Caco-2 (cell line): ENCODE measurements at regions of chr17 and their contacts with region 1.

Region 1: GRCh38 chr17:76868176-76868668 is at the start of gene MGAT5B:
- DNase-seq: peak; percentile 80 to 93
- H3K4me3 ChIP-seq: peak within 1 kb of the TSS; percentile 44
- H3K4me3 Mint-ChIP-seq: peak within 1 kb of the TSS; percentile 62
- H3K27ac Mint-ChIP-seq: no peak within 1 kb of the TSS
- H3K4me1 ChIP-seq: peaks cover 17% of the 10 kb centered on the region; the same call in 1 of the 2 replicates
- H3K4me1 Mint-ChIP-seq: peaks cover 13% of the 10 kb centered on the region
- H3K27me3 ChIP-seq: no peaks in the 10 kb centered on the region
- H3K27me3 Mint-ChIP-seq: no peaks in the 10 kb centered on the region
- CTCF ChIP-seq: peak; percentile 59 to 92
- total RNA-seq, gene MGAT5B: 8.9 and 9.1 TPM in 2 replicates

Region 2: GRCh38 chr17:76659928-76660614 is 208.2 kb before region 1 on chr17:
- CTCF ChIA-PET with region 1: no interaction called
- POLR2A ChIA-PET with region 1: no interaction called
- intact Hi-C with region 1: no loop called
- DNase-seq: peak in 1 of 2 experiments; percentile 51
- H3K4me3 ChIP-seq: no peak overlapping the region
- H3K4me3 Mint-ChIP-seq: no peak overlapping the region
- H3K27ac Mint-ChIP-seq: no peak overlapping the region
- H3K4me1 ChIP-seq: peaks cover 28% of the 10 kb centered on the region
- H3K4me1 Mint-ChIP-seq: peaks cover 25% of the 10 kb centered on the region
- H3K27me3 ChIP-seq: no peaks in the 10 kb centered on the region
- H3K27me3 Mint-ChIP-seq: no peaks in the 10 kb centered on the region
- CTCF ChIP-seq: no peak

Region 3: GRCh38 chr17:77002103-77003045 is 134.2 kb after region 1 on chr17:
- CTCF ChIA-PET with region 1: interaction called, 3 read pairs
- POLR2A ChIA-PET with region 1: no interaction called
- intact Hi-C with region 1: loop called (anchors 2 kb)
- DNase-seq: peak; percentile 92 to 93
- H3K4me3 ChIP-seq: no peak overlapping the region
- H3K4me3 Mint-ChIP-seq: peak overlapping the region; percentile 72
- H3K27ac Mint-ChIP-seq: peak overlapping the region; percentile 96
- H3K4me1 ChIP-seq: peaks cover 25% of the 10 kb centered on the region
- H3K4me1 Mint-ChIP-seq: peaks cover 27% of the 10 kb centered on the region
- H3K27me3 ChIP-seq: no peaks in the 10 kb centered on the region
- H3K27me3 Mint-ChIP-seq: no peaks in the 10 kb centered on the region
- CTCF ChIP-seq: no peak

Region 4: DNA sequence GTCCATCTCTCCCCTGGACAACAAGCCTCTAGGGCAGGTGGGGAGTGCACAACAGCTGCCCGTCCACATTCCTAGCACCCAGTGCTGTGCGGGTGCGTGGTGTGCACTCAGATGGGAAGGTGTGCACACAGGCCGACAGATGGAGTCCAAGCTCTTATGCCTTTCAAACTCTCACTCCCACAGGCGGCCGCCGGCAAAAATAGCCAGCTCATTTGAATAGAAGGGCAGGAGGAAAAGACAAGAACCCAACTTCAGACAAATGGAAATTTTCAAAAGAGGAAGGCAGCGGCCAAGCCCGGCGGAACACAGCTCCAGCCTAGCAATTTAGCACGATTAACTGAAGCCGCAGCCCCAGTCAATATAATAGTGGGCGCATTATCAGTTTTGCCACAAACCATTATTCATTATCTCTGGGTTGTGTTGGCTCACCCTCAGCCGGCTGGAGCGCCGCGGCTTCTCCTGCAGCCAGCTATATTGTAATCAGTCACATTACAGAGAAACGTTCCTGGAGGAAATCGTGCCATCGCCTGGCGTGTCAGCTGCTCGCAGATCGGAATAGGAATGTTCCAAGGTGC is 168.7 kb after region 1 on chr17:
- CTCF ChIA-PET with region 1: interaction called, 15 read pairs
- POLR2A ChIA-PET with region 1: no interaction called
- intact Hi-C with region 1: no loop called
- DNase-seq: peak; percentile 70 to 75
- H3K4me3 ChIP-seq: no peak overlapping the region
- H3K4me3 Mint-ChIP-seq: peak overlapping the region; percentile 50
- H3K27ac Mint-ChIP-seq: no peak overlapping the region
- H3K4me1 ChIP-seq: no peaks in the 10 kb centered on the region
- H3K4me1 Mint-ChIP-seq: peaks cover 14% of the 10 kb centered on the region
- H3K27me3 ChIP-seq: no peaks in the 10 kb centered on the region
- H3K27me3 Mint-ChIP-seq: peaks cover 2% of the 10 kb centered on the region
- CTCF ChIP-seq: peak in 1 of 2 experiments; percentile 53

Region 5: DNA sequence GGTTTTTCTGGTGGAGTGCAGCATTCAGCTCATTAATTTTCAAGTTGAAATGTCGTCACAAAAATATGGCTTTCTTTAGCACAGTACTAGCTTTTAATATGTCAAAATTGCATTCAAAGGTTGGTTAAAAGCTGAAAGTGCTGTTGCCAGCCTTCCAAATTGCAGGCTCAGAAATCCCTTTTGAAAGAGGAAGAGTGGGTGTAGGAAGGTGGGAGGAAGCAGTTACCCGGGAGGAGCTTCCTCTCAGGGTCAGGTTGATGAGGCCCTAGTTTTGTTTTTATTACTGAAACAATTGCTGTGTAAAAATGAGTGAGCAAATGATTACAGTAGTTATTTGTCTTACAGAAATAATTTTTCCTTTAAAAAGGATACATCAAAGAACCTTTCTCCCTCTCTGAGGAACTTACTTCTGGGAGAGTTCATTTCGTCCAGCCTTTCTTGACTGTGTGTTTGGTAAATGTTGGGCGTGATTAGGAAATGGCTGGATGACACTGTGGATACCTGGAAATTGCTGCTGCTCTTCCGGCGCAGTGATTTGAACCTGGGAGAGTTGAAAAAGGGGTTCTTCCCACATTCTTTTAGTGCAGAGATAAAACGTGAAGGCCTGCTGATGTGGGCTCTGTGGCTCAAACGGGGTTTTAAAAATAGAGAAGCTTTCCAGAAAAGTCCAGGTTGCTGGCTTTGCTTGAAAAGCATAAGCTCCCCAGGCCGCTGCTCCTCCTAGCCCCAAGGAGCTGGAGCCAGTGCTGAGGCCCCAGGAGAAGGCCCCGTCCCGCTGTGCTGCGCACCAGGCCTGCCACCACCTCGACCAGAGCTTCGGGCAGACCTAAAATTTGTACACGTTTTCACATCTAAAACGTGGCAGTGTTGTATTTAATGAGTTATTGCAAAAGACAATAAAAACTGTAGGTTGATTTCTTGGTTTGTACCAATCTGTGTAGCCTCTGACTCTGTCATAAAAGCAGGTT is 314.3 kb after region 1 on chr17:
- CTCF ChIA-PET with region 1: no interaction called
- POLR2A ChIA-PET with region 1: no interaction called
- intact Hi-C with region 1: no loop called
- DNase-seq: no peak
- H3K4me3 ChIP-seq: no peak overlapping the region
- H3K4me3 Mint-ChIP-seq: no peak overlapping the region
- H3K27ac Mint-ChIP-seq: no peak overlapping the region
- H3K4me1 ChIP-seq: peaks cover 19% of the 10 kb centered on the region
- H3K4me1 Mint-ChIP-seq: peaks cover 11% of the 10 kb centered on the region
- H3K27me3 ChIP-seq: no peaks in the 10 kb centered on the region
- H3K27me3 Mint-ChIP-seq: no peaks in the 10 kb centered on the region
- CTCF ChIP-seq: no peak